ENCODE measurements at regions of chr17 and their contacts with region 1.

Region 1: GRCh38 chr17:63998050-63998720 is at the start of gene PRR29:
- DNase-seq: no peak
- ATAC-seq: peak; percentile 87
- H3K4me3 ChIP-seq: peak within 1 kb of the TSS; percentile 52 to 59
- H3K27ac ChIP-seq: no peak within 1 kb of the TSS
- H3K4me1 ChIP-seq: no peaks in the 10 kb centered on the region
- H3K27me3 ChIP-seq: peaks cover 3% of the 10 kb centered on the region; the same call in 1 of the 2 replicates
- CTCF ChIP-seq: no peak
- total RNA-seq, gene PRR29: 0.10 TPM

Region 2: DNA sequence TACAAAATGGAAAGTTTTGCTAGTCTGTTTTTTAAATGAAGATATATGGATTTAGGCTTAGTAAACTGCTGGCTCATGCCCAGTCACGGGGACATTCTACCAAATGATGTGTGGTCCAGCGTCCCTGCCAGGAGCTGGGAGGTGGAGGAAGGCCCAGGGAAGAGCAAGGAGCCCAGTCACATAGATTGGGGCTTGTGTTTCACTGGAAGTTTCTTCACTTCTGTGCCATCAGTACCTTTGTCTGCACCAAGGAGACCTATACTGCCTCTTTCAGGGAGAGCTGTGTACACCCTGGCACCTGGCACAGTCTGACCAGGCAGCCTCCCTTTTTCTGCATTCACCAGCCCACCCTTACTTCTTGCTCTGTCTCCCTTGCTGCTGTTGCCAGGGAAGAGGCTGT is 164.4 kb after region 1 on chr17:
- CTCF ChIA-PET with region 1: no interaction called
- POLR2A ChIA-PET with region 1: interaction called, 15 read pairs
- in situ Hi-C with region 1: no loop called
- intact Hi-C with region 1: no loop called
- DNase-seq: no peak
- ATAC-seq: no peak
- H3K4me3 ChIP-seq: no peak overlapping the region
- H3K27ac ChIP-seq: no peak overlapping the region
- H3K4me1 ChIP-seq: no peaks in the 10 kb centered on the region
- H3K27me3 ChIP-seq: no peaks in the 10 kb centered on the region
- CTCF ChIP-seq: no peak

Region 3: GRCh38 chr17:64174686-64175456 is 176.7 kb after region 1 on chr17:
- CTCF ChIA-PET with region 1: no interaction called
- POLR2A ChIA-PET with region 1: no interaction called
- in situ Hi-C with region 1: no loop called
- intact Hi-C with region 1: no loop called
- DNase-seq: no peak
- ATAC-seq: no peak
- H3K4me3 ChIP-seq: no peak overlapping the region
- H3K27ac ChIP-seq: no peak overlapping the region
- H3K4me1 ChIP-seq: no peaks in the 10 kb centered on the region
- H3K27me3 ChIP-seq: no peaks in the 10 kb centered on the region
- CTCF ChIP-seq: no peak

Measured in Panc1 (cell line).